Transverse colon (tissue), 4 donors: ENCODE measurements at regions of chr4 and their contacts with region 1.

Region 1: GRCh38 chr4:181176306-181176705 is 1066.9 kb upstream of the TENM3 start:
- DNase-seq: no peak
- H3K4me3 ChIP-seq: no peak overlapping the region
- H3K27ac ChIP-seq: no peak overlapping the region
- H3K4me1 ChIP-seq: no peaks in the 10 kb centered on the region
- H3K27me3 ChIP-seq: no peaks in the 10 kb centered on the region
- CTCF ChIP-seq: no peak
- EP300 ChIP-seq: no peak
- POLR2A ChIP-seq: no peak

Region 2: DNA sequence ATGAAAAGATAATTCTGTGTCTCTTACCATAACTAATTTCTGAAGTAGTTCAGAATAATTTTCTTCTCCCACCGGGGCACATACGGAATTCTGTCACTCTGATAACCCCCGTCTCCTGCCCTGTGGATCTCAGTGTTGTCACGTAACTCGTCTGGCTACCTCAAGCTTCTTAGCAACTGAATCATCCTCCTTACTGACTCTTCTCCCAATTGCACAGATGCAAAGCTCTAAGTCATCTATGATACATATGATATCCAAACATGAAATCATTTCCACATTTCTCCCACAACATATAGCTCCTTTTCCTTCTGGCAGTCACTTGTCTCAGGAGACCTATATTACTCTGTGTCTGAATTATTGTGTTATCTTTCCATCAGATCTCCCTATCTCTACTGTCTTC is 23.8 kb after region 1 on chr4:
- in situ Hi-C with region 1: no loop called
- intact Hi-C with region 1: loop called (anchors 2 kb)
- DNase-seq: no peak
- H3K4me3 ChIP-seq: no peak overlapping the region
- H3K27ac ChIP-seq: no peak overlapping the region
- H3K4me1 ChIP-seq: no peaks in the 10 kb centered on the region
- H3K27me3 ChIP-seq: no peaks in the 10 kb centered on the region
- CTCF ChIP-seq: no peak
- EP300 ChIP-seq: no peak
- POLR2A ChIP-seq: no peak